Vagina (tissue), 2 donors: ENCODE measurements at regions of chr3 and their contacts with region 1.

Region 1: DNA sequence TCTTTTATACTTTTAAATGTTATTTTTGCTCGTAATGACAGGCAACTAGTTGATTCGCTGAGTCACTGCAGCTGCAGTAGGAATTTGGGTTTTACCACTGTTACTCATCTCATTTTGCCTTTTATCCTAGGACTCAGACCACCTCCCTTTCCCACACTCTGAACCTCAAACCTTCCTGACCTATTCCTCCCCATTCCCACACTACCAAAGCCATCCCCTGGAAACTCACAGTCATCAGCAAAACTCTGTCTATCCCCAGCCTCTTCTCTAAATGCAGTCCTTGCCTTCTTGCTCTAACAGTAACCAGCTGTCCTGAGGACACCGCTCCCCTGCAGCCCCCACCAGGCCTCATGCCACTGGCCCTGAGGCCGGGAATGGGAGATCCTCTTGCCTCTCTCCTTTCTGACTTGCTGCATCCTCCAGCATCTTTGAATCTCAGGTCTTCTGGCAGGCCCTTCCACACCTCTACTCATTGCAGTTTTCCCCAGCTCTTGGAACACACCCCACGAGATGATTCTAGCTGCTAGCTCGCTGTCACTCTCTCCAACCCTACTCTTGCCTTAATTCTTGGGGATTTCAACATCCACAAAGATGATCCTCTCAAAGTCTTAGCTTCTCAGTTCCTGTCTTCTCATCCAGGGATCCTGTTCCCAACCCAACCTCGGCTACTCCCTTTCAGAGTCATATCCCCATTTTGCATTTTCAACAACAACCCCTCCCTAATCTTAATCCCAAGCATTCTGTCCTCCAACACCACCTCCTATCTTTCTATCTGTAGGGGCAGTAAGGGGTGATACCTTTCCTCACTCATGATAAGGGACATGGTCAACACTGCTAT is 55.9 kb upstream of the C3orf80 start:
- DNase-seq: no peak
- H3K4me3 ChIP-seq: no peak overlapping the region
- H3K27ac ChIP-seq: no peak overlapping the region
- H3K4me1 ChIP-seq: no peaks in the 10 kb centered on the region
- H3K27me3 ChIP-seq: no peaks in the 10 kb centered on the region
- CTCF ChIP-seq: no peak
- POLR2A ChIP-seq: no peak

Region 2: GRCh38 chr3:160129459-160130061 is 39.8 kb before region 1 on chr3:
- intact Hi-C with region 1: no loop called
- DNase-seq: no peak
- H3K4me3 ChIP-seq: no peak overlapping the region
- H3K27ac ChIP-seq: no peak overlapping the region
- H3K4me1 ChIP-seq: no peaks in the 10 kb centered on the region
- H3K27me3 ChIP-seq: no peaks in the 10 kb centered on the region
- CTCF ChIP-seq: no peak
- POLR2A ChIP-seq: no peak

Region 3: DNA sequence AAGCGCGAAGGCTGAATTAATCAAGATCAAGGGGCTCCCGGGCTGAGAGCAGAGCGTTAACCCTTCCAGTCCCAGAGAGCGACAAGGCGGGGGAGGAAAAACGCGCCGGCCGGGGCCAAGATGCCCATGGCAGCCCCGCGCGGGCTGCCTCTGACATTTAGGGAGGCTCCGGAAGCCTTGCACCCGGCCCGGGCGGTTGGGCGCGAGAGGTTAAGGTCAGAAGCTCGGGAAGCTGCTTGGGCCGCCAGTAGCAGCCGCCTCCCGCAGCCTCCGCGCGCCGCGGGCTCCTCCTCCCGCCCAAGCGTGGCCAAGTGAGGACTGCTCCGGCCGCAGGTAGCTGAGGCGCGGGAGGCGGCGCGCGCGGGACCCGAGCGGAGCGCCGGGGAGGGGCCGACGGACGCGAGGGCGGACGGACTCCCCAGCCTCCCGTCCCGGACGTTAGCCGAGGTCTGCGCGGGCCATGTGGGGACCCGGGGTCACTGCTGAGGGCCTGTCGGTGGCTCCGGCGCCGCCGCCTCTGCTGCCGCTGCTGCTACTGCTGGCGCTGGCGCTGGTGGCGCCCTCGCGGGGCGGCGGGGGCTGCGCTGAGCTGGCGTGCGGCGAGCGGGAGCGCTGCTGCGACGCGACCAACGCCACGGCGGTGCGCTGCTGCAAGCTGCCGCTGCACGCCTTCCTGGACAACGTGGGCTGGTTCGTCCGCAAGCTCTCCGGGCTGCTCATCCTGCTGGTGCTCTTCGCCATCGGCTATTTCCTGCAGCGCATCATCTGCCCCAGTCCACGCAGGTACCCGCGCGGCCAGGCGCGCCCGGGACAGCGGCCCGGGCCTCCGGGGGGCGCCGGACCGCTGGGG is 56.0 kb after region 1 on chr3 and contains the start of gene C3orf80:
- intact Hi-C with region 1: loop called (anchors 2 kb)
- DNase-seq: no peak
- H3K4me3 ChIP-seq: peak within 1 kb of the TSS; percentile 42 to 59
- H3K27ac ChIP-seq: no peak within 1 kb of the TSS
- H3K4me1 ChIP-seq: peaks cover 30% of the 10 kb centered on the region
- H3K27me3 ChIP-seq: no peaks in the 10 kb centered on the region
- CTCF ChIP-seq: no peak
- POLR2A ChIP-seq: no peak
- total RNA-seq, gene C3orf80: not detected